Right ventricle myocardium inferior (tissue), 1 donor: ENCODE measurements at regions of chr20 and their contacts with region 1.

Region 1: GRCh38 chr20:14051454-14051853 is 56.1 kb downstream of the MACROD2 start:
- DNase-seq: no peak
- ATAC-seq: no peak

Region 2: DNA sequence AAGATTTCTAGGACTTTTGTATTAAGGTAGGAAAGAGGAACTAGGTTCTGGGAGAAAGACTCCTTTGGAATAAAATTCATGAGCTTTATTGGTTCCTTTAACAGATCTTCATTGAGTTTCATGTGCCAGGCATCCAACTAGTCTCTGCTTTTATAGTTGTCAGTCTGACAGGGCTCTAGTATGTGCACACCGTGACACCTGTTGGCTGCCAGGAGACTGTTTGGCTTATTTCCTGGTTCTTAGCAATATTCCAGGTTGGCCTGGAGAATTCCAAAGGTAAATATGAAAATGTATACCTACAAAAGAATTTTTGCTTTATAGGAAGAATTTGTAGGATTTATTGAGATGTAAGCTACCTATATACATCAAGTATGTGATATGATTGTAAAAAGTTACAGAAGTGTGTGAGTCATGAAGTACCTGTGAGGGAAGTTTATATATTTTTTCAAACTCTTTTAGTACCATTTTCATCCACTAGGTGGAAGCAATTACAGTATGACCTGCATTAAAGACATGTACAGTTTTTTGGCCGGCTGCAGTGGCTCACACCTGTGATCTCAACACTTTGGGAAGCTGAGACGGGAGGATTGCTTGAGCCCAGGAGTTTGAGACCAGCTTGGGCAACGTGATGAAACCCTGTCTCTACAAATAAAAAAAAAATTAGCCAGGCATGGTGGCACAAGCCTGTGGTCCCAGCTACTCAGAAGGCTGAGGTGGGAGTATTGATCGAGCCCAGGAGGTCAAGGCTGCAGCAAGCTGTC is 231.4 kb before region 1 on chr20:
- intact Hi-C with region 1: loop called (anchors 5 kb)
- DNase-seq: no peak
- ATAC-seq: peak; percentile 65